ENCODE measurements at regions of chr10 and their contacts with region 1.

Region 1: DNA sequence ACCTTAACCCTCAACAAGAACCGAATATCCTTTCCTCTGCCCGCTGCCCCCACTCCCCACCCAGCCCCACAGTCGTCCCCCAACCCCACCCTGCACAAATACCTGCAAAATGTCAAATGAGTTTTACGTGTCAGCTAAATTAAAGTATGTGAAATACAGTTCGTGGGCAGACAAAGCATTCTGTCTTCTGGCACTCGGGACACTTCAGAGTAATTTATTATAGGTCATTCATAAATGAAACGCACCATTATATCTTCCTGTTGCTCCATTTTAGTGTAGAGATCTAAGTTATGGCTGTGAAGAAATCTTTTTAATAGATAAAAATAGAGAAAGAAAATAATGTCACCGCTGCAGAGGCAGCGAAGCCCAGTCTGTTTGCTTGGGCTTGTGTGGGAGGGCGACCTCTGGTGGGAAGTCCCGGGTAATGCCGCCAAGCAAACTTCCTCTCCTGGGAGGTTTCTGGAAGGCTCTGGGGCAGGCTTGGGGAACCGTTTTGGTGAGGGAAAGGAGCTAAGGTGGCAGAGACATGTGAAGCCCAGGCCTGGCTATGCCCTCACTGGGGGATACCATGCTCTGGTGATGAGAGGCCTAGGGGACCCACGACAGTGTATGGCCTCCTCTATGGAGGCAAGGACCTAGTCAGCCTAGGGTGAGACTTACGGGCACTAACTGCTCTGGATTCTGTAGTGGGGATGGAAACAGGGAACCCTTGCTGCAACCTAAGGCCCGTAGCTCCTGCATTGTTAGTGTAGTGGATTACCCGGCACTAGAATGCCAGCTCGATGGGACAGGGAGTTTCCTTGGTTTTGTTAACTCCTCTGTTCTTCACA is 604.9 kb downstream of the LRMDA start:
- DNase-seq: peak in 1 of 2 experiments; percentile 49
- H3K4me3 ChIP-seq: no peak overlapping the region
- H3K27ac ChIP-seq: no peak overlapping the region
- H3K4me1 ChIP-seq: no peaks in the 10 kb centered on the region
- H3K27me3 ChIP-seq: no peaks in the 10 kb centered on the region
- CTCF ChIP-seq: peak; percentile 91

Region 2: GRCh38 chr10:75682649-75683557 is 353.4 kb before region 1 on chr10:
- CTCF ChIA-PET with region 1: no interaction called
- POLR2A ChIA-PET with region 1: no interaction called
- intact Hi-C with region 1: no loop called
- DNase-seq: no peak
- H3K4me3 ChIP-seq: no peak overlapping the region
- H3K27ac ChIP-seq: no peak overlapping the region
- H3K4me1 ChIP-seq: no peaks in the 10 kb centered on the region
- H3K27me3 ChIP-seq: no peaks in the 10 kb centered on the region
- CTCF ChIP-seq: no peak

Region 3: DNA sequence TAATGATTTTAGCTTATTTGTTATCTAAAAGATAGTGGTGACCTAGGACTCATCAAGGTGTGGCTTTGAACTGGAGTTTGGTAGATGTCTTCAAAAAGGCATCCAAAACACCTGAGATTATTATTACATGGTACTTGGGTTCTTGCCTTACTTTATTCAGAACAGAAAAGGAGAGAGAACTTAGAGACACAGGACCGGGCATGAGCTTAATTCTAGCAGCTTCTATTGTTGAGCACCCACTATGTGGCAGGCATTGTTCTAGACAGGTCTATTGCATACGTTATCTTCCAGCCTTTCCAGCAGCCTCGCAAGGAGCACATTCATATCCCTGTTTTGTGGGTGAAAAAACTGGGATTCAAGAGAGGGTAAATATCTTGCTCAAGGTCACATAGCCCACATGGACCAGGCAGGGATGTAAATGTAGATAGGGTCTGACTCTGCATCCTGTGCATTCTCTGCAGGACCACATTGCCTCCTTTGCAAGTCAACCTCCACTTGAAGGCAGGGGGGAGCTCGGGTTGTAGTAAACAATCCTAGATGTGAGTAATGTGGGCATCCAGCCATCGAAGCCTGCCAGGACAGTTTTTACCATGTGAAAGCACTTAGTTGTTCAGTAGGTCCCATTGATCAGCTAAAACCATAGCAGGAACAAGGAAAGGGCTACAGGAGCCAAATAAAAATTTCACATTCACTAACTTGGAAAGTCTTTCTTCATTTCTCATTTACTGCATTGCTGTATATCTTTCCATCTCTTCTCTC is 53.5 kb before region 1 on chr10:
- CTCF ChIA-PET with region 1: no interaction called
- POLR2A ChIA-PET with region 1: no interaction called
- intact Hi-C with region 1: no loop called
- DNase-seq: no peak
- H3K4me3 ChIP-seq: no peak overlapping the region
- H3K27ac ChIP-seq: no peak overlapping the region
- H3K4me1 ChIP-seq: no peaks in the 10 kb centered on the region
- H3K27me3 ChIP-seq: no peaks in the 10 kb centered on the region
- CTCF ChIP-seq: no peak

Region 4: GRCh38 chr10:76086761-76087639 is 50.7 kb after region 1 on chr10:
- CTCF ChIA-PET with region 1: no interaction called
- POLR2A ChIA-PET with region 1: no interaction called
- intact Hi-C with region 1: no loop called
- DNase-seq: no peak
- H3K4me3 ChIP-seq: no peak overlapping the region
- H3K27ac ChIP-seq: no peak overlapping the region
- H3K4me1 ChIP-seq: no peaks in the 10 kb centered on the region
- H3K27me3 ChIP-seq: no peaks in the 10 kb centered on the region
- CTCF ChIP-seq: peak; percentile 69

Region 5: DNA sequence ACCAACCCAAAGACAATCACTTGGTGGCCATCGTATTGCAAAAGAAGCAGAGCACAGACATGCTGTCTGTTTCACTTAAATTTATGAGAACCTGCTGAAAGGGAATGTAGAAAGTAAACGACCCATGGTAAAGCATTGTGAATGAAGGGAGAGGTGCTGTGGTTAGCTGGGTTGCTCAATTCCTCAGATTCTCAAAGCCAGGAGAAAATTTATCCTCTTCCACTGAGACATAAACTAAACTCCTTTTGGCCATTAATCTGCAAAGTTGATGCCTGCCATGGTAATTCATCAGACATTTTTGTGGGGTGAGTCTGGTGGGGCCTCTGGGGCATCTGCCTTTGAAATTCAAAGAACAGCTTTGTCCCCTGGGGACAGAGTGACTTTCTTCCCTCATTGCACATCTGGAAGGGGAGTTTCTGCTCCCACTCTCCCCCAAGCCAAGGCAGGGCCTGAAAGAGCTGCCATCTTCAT is 346.1 kb after region 1 on chr10:
- CTCF ChIA-PET with region 1: no interaction called
- POLR2A ChIA-PET with region 1: no interaction called
- intact Hi-C with region 1: no loop called
- DNase-seq: no peak
- H3K4me3 ChIP-seq: no peak overlapping the region
- H3K27ac ChIP-seq: no peak overlapping the region
- H3K4me1 ChIP-seq: 0 out of 2 replicates have a peak, but pooled peaks cover 3% of the 10 kb centered on the region
- H3K27me3 ChIP-seq: no peaks in the 10 kb centered on the region
- CTCF ChIP-seq: no peak

Region 6: GRCh38 chr10:76547352-76547972 is 511.1 kb after region 1 on chr10:
- CTCF ChIA-PET with region 1: no interaction called
- POLR2A ChIA-PET with region 1: no interaction called
- intact Hi-C with region 1: loop called (anchors 2 kb)
- DNase-seq: peak; percentile 49 to 67
- H3K4me3 ChIP-seq: no peak overlapping the region
- H3K27ac ChIP-seq: no peak overlapping the region
- H3K4me1 ChIP-seq: no peaks in the 10 kb centered on the region
- H3K27me3 ChIP-seq: no peaks in the 10 kb centered on the region
- CTCF ChIP-seq: peak; percentile 90

Measured in PC-9 (cell line).